ENCODE measurements at regions of chr6 and their contacts with region 1.

Region 1: DNA sequence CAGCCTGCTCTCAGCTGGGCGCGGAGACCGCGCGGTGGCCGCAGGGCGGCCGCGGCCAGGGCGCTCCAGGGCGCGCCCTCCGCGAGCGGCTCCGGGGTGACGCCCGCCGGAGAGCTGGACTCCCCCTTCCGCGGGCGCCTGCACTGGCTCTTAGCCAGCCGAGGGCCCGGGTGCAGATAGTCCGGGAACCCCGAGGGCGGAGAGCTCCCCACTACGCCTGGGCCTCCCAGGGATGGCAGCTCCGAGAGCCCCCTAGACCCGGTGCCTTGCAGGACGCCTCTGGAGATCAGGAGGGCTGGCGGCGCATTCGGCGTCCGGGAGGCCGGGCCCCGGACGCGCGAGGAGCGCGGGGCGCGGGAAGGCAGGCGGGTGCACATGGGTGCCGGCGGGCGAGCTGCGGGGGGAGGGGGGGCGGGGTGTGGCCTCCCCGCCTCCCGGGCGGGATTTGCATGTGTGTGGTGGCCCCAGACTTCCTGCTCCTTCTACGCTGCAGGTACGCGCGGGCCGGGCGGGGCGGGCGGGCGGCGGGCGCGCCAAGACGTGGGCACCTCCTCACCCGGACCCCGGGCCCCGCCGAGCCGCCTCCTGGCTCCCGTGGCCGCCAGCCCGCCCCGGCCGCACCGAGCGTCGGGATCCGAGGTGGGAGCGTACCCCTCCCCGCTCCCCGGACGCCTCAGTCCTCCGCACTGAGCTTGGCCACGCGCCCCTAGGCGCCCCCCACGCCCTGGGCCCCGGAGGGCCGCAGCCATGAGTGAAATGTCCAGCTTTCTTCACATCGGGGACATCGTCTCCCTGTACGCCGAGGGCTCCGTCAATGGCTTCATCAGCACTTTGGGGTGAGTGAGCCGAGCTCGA is at the start of gene ITPR3:
- DNase-seq: peak; percentile 69 to 74
- H3K4me3 ChIP-seq: peak within 1 kb of the TSS; percentile 100
- H3K27ac ChIP-seq: peak within 1 kb of the TSS; percentile 78
- H3K4me1 ChIP-seq: peaks cover 50% of the 10 kb centered on the region
- H3K27me3 ChIP-seq: no peaks in the 10 kb centered on the region
- CTCF ChIP-seq: no peak
- total RNA-seq, gene ITPR3: 78.3 and 86.9 TPM in 2 replicates

Region 2: GRCh38 chr6:33425668-33426577 is 195.2 kb before region 1 on chr6:
- CTCF ChIA-PET with region 1: no interaction called
- POLR2A ChIA-PET with region 1: no interaction called
- intact Hi-C with region 1: no loop called
- DNase-seq: peak; percentile 66 to 87
- H3K4me3 ChIP-seq: peak overlapping the region; percentile 71
- H3K27ac ChIP-seq: peak overlapping the region; percentile 57
- H3K4me1 ChIP-seq: peaks cover 19% of the 10 kb centered on the region
- H3K27me3 ChIP-seq: peaks cover 21% of the 10 kb centered on the region
- CTCF ChIP-seq: peak; percentile 71

Region 3: DNA sequence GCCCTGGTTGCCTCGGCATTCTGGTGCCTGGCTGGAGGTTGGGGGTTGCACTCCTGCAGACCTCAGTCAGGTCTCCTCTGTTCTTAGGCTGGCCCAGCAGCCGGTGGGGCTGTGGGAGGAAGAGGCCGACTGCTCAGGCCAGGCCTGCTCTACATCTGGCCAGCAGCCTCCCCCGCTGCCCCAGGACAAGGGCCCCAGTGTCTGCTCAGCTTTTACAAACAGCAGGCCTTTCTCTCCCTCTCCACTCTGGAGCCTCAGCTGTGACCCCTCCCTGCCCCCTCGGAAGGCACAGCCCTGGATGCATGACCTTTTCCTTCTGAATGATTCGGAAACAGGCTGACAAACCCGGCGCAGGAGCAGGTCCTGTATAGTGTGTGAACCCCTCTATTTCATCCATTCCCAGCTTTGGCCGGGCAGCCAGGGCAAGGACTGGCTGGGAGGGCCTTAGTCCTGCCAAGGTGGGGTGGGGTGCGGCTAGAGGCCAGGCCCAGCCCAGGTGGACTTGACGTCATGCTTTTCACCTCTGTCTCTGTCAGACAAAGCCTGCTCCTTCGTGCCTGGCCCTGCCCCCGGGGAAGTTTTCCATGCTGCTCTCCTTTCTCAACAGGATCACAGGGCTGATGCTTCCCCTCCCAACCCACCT is 10.2 kb before region 1 on chr6:
- CTCF ChIA-PET with region 1: no interaction called
- POLR2A ChIA-PET with region 1: no interaction called
- intact Hi-C with region 1: loop called (anchors 1 kb)
- DNase-seq: peak in 1 of 2 experiments; percentile 77
- H3K4me3 ChIP-seq: no peak overlapping the region
- H3K27ac ChIP-seq: no peak overlapping the region
- H3K4me1 ChIP-seq: peaks cover 69% of the 10 kb centered on the region
- H3K27me3 ChIP-seq: no peaks in the 10 kb centered on the region
- CTCF ChIP-seq: no peak

Region 4: GRCh38 chr6:33632558-33633039 is 11.5 kb after region 1 on chr6:
- CTCF ChIA-PET with region 1: interaction called, 4 read pairs
- POLR2A ChIA-PET with region 1: interaction called, 27 read pairs
- intact Hi-C with region 1: no loop called
- DNase-seq: no peak
- H3K4me3 ChIP-seq: peak overlapping the region; percentile 54; the same call in 1 of the 2 replicates
- H3K27ac ChIP-seq: peak overlapping the region; percentile 34
- H3K4me1 ChIP-seq: peaks cover 29% of the 10 kb centered on the region
- H3K27me3 ChIP-seq: no peaks in the 10 kb centered on the region
- CTCF ChIP-seq: peak; percentile 79; the same call in 1 of the 2 replicates

Region 5: DNA sequence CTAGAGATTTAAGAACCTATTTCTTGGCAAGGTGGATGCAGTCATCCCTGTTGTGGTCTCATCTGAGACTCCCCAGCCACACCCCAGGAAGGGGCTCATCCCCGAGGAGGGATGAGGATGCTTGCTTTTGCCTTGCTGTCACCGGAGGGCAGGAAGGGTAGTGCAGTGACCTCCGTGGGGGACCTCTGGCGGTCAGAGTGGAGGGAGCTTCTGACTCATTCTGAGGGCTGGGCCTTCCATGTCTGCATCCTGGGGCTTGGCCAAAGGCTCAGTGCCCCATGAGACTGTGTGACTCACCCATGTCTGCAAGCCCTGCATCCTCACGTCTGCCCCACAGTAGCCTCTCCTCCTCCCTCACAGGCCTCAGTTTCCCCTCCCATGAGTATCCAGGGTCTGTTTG is 51.7 kb after region 1 on chr6:
- CTCF ChIA-PET with region 1: no interaction called
- POLR2A ChIA-PET with region 1: interaction called, 3 read pairs
- intact Hi-C with region 1: loop called (anchors 2 kb)
- DNase-seq: peak; percentile 86 to 89
- H3K4me3 ChIP-seq: no peak overlapping the region
- H3K27ac ChIP-seq: no peak overlapping the region
- H3K4me1 ChIP-seq: peaks cover 15% of the 10 kb centered on the region
- H3K27me3 ChIP-seq: no peaks in the 10 kb centered on the region
- CTCF ChIP-seq: peak; percentile 64

Measured in PC-9 (cell line).